ENCODE measurements at regions of chr2 and their contacts with region 1.

Region 1: DNA sequence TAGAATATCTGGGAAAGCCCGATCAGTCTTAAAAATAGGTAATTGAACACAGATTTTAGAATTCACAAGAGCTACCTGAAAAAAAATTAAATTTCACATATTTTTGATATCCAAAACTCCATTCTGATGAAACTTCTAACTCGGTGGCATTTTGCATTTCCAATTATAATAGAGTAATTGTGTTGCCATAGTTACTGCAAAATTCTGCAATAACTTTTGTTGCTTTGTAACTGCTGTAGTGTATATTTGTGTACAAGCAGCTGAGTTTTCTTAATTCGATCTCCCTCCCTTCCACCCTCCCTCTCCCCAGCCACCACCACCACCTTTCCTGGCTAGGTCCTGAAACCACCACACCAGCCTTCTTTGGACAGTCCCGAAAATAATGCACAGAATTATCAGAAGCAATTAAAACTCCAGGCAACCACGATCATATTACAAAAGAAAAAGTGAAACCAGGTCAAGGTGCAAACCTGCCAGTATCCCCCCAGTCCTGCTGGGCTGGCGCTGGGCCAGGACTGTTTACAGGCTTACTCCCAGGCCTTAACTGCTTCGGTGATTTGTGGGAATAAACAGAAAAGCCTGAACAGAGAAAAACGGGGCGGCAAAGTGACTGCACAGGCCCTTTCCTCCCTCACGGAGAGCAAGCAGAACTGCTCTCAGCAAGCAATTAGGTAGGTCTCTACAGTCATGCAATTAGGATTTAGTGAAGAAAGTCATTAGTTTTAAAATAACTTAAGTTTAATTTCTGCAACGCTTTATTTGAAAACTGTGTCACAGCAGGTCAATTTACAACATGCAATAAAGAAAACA is 1.5 kb downstream of the HDAC4 start:
- DNase-seq: no peak
- ATAC-seq: no peak

Region 2: GRCh38 chr2:239285071-239285931 is 114.0 kb before region 1 on chr2:
- intact Hi-C with region 1: no loop called
- DNase-seq: peak; percentile 21
- ATAC-seq: peak in 1 of 2 donors; percentile 27

Region 3: DNA sequence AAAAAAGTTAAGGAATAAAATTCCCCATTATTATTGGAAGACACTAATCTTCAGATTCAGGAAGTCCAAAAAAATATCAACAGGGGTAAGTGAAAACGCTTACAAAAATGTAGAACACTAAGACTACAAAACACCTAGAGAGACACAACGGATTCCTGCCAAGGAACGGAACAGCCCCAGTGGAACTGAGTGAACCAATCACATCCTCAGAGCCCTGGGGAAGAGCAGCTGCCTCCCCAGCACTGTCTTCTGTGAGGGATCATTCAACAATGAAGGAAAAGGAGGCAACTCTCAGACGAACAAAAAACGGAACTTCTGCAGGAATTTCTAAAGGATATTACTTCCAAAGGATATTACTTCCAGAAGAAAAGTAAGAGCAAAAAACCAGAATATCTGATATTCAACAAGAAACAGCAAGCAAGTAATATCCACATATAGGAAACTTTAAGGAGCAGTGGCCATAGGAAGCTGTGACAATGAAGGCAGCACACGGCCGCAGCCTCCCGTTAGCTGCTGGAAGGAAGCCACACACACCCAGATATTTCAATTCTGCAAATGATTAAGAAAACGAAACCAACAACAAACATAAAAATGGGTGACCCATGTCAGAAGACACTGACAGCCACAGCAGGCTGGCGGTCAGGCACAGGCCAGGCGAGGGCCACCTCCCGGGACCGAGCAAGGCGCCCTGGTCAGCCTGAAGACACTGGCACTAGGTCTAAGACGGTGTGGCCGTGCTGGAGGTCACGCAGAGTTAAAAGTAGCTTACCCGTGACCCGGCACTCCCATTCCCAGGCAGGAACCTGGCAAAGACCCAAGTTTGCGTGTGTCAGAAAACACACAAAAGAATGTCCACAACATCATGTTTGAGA is 80.3 kb before region 1 on chr2:
- intact Hi-C with region 1: loop called in 1 of 2 experiments (anchors 10 kb)
- DNase-seq: peak; percentile 64
- ATAC-seq: peak; percentile 54 to 58

Region 4: DNA sequence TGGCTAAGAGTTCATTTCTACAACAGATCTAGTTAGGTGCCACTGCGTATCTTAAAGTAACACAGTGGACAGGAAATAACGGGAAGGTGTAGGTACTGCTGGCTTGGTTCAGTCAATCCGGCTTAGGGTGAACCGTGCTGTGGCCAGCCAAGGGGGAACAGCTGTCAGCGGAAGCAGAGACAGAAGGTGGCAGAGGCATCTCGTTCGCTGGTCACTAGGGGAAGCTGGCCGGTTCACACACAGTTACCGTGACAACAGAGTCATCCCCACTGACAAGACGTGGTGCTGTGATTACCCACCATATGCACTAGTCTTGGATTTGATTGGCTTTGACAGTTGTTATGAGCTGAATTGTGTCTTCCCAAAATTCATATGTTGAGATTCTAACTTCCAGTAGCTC is 60.3 kb after region 1 on chr2:
- intact Hi-C with region 1: no loop called
- DNase-seq: no peak
- ATAC-seq: no peak

Region 5: GRCh38 chr2:239688122-239688681 is 288.9 kb after region 1 on chr2:
- intact Hi-C with region 1: no loop called
- DNase-seq: no peak
- ATAC-seq: no peak

Measured in left cardiac atrium (tissue), 4 donors.